HEK293 (cell line): ENCODE measurements at regions of chr9 and their contacts with region 1.

Region 1: DNA sequence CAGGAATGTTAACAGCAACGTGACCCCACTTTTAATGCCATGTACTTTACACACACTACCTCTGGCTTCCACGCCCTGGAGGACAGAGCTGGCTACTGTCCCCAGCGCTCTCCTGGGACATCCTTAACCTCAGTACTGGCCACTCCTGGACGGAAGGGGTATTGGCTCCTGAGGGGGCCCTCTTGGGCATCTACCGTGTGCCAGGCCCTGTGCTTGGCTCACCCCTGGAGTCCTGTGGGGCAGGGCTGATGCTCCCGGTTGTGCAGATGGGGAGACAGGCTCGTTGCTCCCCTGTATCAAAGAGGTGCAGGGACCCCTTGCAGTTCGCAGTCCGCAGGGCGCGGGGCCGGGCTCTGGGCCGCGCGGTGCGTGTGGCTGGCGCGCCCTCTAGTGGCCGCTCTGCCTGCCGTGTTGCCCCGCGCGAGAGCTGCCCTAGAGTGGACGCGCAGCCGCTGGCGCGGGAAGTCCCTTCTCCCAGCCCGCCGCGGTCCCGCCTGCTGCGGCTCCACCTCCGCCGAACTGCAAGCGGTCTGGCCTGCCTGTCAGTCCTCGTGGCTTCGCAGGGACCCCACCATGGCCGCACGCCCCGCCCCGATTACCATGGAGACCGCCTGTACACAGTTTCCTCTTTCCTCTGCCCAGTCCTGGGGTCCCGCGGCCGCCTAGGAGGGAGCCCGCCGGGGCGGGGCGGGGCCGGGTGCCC is at the start of gene WDR38:
- H3K4me3 ChIP-seq: peak within 1 kb of the TSS; percentile 47
- H3K27ac ChIP-seq: no peak within 1 kb of the TSS
- H3K4me1 ChIP-seq: no peaks in the 10 kb centered on the region
- CTCF ChIP-seq: peak; percentile 98

Region 2: GRCh38 chr9:124392871-124393460 is 460.0 kb before region 1 on chr9:
- CTCF ChIA-PET with region 1: no interaction called
- POLR2A ChIA-PET with region 1: no interaction called
- H3K4me3 ChIP-seq: no peak overlapping the region
- H3K27ac ChIP-seq: no peak overlapping the region
- H3K4me1 ChIP-seq: peaks cover 15% of the 10 kb centered on the region
- CTCF ChIP-seq: no peak

Region 3: DNA sequence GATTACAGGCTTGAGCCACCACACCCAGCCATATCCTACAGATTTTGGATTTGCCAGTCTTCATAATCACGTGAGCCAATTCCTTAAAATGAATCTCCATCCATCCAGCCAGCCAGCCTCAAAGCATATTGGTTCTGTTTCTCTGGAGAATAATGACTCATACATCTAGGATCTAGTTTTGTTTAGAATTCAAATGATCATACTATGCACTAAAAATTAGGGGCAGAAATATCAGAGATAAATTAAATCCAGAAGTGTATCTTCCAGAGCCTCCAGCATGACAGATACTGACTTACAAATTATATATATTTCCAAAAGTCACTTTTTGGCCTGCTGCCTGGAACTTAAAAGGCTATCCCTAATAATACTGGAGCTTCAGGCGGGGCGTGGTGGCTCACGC is 226.7 kb before region 1 on chr9:
- CTCF ChIA-PET with region 1: no interaction called
- POLR2A ChIA-PET with region 1: no interaction called
- H3K4me3 ChIP-seq: no peak overlapping the region
- H3K27ac ChIP-seq: no peak overlapping the region
- H3K4me1 ChIP-seq: no peaks in the 10 kb centered on the region
- CTCF ChIP-seq: no peak

Region 4: GRCh38 chr9:124771021-124771866 is 81.7 kb before region 1 on chr9 and contains the start of gene NR6A1:
- CTCF ChIA-PET with region 1: interaction called, 1,257 read pairs
- POLR2A ChIA-PET with region 1: interaction called, 201 read pairs
- H3K4me3 ChIP-seq: peak within 1 kb of the TSS; percentile 96
- H3K27ac ChIP-seq: peak within 1 kb of the TSS; percentile 91
- H3K4me1 ChIP-seq: peaks cover 16% of the 10 kb centered on the region; the same call in 1 of the 2 replicates
- CTCF ChIP-seq: peak; percentile 51; the same call in 1 of the 2 replicates

Region 5: DNA sequence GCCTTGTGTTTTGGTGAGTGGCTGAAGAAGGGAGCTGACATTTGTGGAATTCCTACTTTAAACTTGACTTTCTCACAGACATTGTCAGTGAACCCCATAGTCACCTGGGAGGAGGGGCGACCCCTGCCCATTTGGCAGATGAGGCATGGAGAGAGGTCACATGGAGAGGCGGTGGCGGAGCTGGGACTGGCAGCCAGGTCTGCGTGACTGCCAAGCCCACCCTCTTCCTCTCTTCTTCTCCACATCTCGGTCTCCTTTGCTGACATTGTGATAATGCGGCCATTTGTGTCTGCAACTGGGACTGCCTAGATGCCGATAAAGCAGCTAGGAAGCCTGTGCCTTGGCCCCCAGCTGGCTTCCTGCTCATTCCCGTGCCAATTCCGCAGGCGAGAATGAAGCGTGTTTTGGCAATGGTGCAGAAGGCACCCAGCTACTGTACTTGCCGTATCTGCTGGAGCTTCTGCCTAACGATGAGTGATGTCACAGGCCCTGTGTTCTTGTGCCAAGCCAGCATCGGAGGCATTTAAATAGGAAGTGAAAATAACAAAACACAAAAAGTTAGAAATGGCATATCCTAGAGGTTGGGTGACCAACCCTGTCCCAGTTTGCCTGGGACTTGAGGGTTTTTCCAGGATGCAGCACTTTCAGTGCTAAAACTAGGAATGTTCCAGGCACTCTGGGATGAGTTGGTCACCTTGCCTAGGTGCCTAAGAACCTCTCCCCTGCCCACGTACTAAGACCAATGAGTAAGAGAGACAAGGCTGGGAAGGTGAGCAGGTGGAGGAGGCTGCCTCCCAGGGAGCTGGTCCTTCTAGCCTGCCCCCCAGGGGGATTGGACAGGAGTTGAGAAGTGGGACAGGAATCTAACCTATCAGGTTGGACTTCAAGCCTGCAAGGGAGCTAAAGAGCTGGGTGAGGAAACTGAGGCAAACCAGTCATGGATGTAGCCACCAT is 52.4 kb before region 1 on chr9:
- CTCF ChIA-PET with region 1: interaction called, 73 read pairs
- POLR2A ChIA-PET with region 1: interaction called, 4 read pairs
- H3K4me3 ChIP-seq: no peak overlapping the region
- H3K27ac ChIP-seq: no peak overlapping the region
- H3K4me1 ChIP-seq: no peaks in the 10 kb centered on the region
- CTCF ChIP-seq: no peak

Region 6: DNA sequence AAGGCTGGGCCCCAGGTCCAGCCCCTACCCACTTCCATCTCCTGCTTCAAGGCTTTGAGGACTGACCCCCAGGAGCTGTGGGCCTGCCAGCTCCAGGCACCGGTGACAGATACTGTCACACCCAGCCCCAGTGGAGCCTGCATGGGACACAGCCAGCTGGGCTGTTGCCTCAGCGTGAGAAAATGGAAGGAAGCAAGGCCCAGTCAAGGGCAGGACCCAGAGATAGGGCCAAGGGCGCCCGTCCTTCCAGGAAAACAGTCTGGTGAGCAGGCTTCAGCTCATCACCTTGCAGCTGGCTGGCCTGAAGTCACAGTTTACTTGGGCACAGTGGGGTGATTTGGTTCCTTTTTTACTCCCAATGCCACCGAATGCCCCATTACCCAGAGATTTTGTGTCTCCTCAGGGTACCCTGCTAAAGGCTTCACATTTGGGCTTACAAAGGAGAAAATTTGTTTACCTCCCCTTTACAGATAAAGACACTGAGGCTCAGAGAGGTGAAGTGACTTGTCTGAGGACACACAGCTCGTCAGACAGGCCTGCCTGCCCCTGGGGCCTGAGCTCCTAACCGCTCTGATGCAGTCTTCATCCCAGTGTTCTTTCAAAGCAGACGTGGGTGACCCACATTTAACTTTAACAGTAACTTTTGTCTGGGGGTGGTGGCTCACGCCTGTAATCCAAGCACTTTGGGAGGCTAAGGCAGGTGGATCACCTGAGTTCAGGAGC is 21.2 kb before region 1 on chr9:
- CTCF ChIA-PET with region 1: interaction called, 154 read pairs
- POLR2A ChIA-PET with region 1: interaction called, 6 read pairs
- H3K4me3 ChIP-seq: no peak overlapping the region
- H3K27ac ChIP-seq: no peak overlapping the region
- H3K4me1 ChIP-seq: peaks cover 10% of the 10 kb centered on the region
- CTCF ChIP-seq: no peak

Region 7: DNA sequence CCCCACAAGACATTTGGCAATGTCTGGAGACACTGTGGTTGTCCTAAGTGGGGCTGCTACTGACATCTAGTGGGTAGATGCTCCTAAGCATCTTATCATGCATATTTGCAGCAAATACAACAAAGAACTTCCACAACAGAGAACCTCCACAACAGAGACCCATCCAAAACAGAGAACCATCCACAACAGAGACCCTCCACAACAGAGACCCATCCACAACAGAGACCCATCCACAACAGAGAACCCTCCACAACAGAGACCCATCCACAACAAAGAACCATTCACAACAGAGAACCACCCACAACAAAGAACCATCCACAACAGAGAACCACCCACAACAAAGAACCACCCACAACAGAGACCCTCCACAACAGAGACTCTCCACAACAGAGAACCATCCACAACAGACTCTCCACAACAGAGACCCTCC is 41.8 kb after region 1 on chr9:
- CTCF ChIA-PET with region 1: interaction called, 11 read pairs
- POLR2A ChIA-PET with region 1: interaction called, 3 read pairs
- H3K4me3 ChIP-seq: no peak overlapping the region
- H3K27ac ChIP-seq: no peak overlapping the region
- H3K4me1 ChIP-seq: no peaks in the 10 kb centered on the region
- CTCF ChIP-seq: peak; percentile 49; the same call in 1 of the 2 replicates